ENCODE measurements at regions of chr1 and their contacts with region 1.

Region 1: GRCh38 chr1:114282751-114283403 is 129.2 kb upstream of the SYT6 start:
- DNase-seq: peak; percentile 96

Region 2: GRCh38 chr1:113835642-113836307 is 447.1 kb before region 1 on chr1:
- intact Hi-C with region 1: loop called in 1 of 2 experiments (anchors 10 kb)
- DNase-seq: no peak

Region 3: GRCh38 chr1:115515270-115515669 is 1232.4 kb after region 1 on chr1:
- intact Hi-C with region 1: no loop called
- DNase-seq: no peak

Measured in posterior vena cava (tissue), 2 donors.